Calu3 (cell line): ENCODE measurements at regions of chr4 and their contacts with region 1.

Region 1: DNA sequence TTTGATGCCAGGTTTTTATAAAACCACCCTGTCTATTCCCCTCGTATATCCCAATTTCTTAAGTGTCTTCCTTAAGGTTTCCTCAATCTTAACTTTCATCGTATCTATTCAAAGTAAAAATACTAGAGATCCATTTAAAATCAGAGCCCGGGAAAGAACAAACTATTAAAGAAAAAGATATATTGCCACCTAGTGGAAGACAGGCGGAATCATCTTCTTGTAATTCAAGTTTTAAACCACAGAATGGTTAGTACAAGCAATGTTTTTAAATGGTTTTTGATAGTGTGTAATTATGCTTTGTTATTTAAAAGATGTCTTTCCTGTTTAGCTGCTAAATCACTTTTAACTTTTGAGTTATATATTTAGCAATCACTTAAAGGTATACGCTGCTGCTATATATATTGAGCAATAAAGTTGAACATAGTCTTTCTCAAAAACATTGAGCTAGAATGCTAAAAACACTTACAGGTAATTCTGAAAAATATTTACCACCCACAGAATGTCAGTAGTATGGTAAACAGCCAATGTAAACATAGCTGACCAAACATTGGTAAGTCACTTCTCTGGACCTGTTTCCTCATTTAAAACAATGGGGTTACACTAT is 18.2 kb downstream of the PRDM8 start:
- DNase-seq: no peak
- H3K4me3 Mint-ChIP-seq: no peak overlapping the region
- H3K27ac Mint-ChIP-seq: no peak overlapping the region
- H3K4me1 Mint-ChIP-seq: peaks cover 8% of the 10 kb centered on the region
- H3K27me3 Mint-ChIP-seq: no peaks in the 10 kb centered on the region
- CTCF ChIP-seq: peak; percentile 15

Region 2: GRCh38 chr4:79917246-79917645 is 298.3 kb before region 1 on chr4:
- CTCF ChIA-PET with region 1: no interaction called
- intact Hi-C with region 1: loop called (anchors 5 kb)
- DNase-seq: peak; percentile 54
- H3K4me3 Mint-ChIP-seq: no peak overlapping the region
- H3K27ac Mint-ChIP-seq: no peak overlapping the region
- H3K4me1 Mint-ChIP-seq: no peaks in the 10 kb centered on the region
- H3K27me3 Mint-ChIP-seq: no peaks in the 10 kb centered on the region
- CTCF ChIP-seq: peak; percentile 59